Activated CD8-positive, alpha-beta T cell treated with anti-CD3 and anti-CD28 coated beads, Interleukin-2, amount 10 ng/mL, durations not matched to agents 7 days and 5 days (primary cell): ENCODE measurements at regions of chr22 and their contacts with region 1.

Region 1: GRCh38 chr22:40645579-40646197 is 9.2 kb upstream of the MRTFA start:
- DNase-seq: no peak
- ATAC-seq: no peak
- H3K4me3 Mint-ChIP-seq: no peak overlapping the region
- H3K27ac Mint-ChIP-seq: no peak overlapping the region
- H3K4me1 Mint-ChIP-seq: peaks cover 12% of the 10 kb centered on the region
- H3K27me3 Mint-ChIP-seq: peaks cover 2% of the 10 kb centered on the region

Region 2: DNA sequence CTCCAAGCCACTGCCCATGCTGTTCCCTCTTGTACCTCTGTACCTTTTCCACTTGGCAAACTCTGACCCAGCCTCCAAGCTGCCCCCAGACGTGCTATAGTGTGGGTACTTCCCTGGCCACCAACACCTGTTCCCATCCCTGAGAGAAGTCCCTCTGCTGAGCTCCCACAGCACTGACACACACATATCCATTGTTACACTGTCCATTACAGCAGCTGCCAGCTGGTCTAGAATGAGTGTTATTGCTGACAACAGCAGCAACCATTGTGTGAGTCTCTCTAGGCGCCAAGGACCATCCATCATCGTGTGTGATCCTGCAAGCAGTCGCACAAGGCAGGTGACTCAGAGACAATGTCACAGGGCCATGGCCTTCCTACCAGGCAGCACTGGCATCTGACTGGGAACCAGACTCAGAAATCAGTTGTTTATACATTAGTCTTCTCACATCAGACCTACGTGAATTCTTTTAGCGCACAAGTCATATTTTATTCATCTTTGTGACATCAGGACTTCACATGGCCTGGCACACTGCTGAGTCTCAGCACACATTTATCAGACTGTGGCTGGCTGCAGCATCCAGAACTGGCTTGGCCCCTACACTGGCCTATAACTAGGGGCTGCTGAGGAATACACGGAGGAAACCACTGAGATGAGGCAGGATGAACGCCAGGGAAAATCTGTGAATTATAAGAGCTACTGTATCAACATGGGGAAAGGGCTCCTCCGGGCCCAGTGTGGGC is 218.9 kb before region 1 on chr22:
- CTCF ChIA-PET with region 1: interaction called, 15 read pairs
- POLR2A ChIA-PET with region 1: no interaction called
- DNase-seq: no peak
- ATAC-seq: no peak
- H3K4me3 Mint-ChIP-seq: no peak overlapping the region
- H3K27ac Mint-ChIP-seq: peak overlapping the region; percentile 48
- H3K4me1 Mint-ChIP-seq: peaks cover 7% of the 10 kb centered on the region
- H3K27me3 Mint-ChIP-seq: no peaks in the 10 kb centered on the region

Region 3: DNA sequence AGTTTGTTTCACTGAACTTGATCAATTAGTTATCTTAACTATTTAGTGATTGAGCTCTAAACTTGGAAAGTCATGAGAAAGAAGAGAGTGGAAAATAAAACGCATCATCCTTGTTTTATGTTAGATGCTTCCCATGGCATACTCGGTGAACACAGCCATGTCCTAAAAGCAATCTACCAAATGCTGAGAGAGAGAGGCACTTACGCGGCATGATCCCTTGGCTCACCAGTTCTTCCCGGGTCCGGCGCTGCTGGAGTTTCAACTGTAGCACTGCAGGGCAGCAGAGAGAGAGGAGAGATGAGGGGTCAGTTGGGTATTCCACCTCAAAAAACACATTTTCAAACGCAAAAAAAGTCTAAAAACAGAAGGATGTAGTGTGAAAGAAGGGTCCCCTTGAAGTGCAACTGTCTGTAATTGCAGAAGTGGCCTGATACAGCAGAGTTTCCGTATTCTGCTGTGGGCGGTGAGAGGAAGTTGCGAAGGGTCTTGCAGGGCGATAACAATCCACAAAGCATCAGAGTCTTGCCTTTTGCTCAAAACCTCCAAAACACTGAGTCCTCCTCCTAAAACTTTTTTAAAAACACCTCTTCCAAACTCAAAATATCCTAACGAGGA is 182.6 kb before region 1 on chr22:
- CTCF ChIA-PET with region 1: interaction called, 12 read pairs
- POLR2A ChIA-PET with region 1: no interaction called
- DNase-seq: peak; percentile 72
- ATAC-seq: peak; percentile 83
- H3K4me3 Mint-ChIP-seq: peak overlapping the region; percentile 96
- H3K27ac Mint-ChIP-seq: peak overlapping the region; percentile 97
- H3K4me1 Mint-ChIP-seq: peaks cover 39% of the 10 kb centered on the region
- H3K27me3 Mint-ChIP-seq: no peaks in the 10 kb centered on the region

Region 4: GRCh38 chr22:40519284-40519947 is 126.3 kb before region 1 on chr22:
- CTCF ChIA-PET with region 1: interaction called, 229 read pairs
- POLR2A ChIA-PET with region 1: interaction called, 3 read pairs
- DNase-seq: no peak
- ATAC-seq: peak; percentile 94
- H3K4me3 Mint-ChIP-seq: peak overlapping the region; percentile 68
- H3K27ac Mint-ChIP-seq: peak overlapping the region; percentile 88
- H3K4me1 Mint-ChIP-seq: peaks cover 26% of the 10 kb centered on the region
- H3K27me3 Mint-ChIP-seq: no peaks in the 10 kb centered on the region

Region 5: GRCh38 chr22:40583053-40583741 is 62.5 kb before region 1 on chr22:
- CTCF ChIA-PET with region 1: interaction called, 21 read pairs
- POLR2A ChIA-PET with region 1: no interaction called
- DNase-seq: no peak
- ATAC-seq: no peak
- H3K4me3 Mint-ChIP-seq: no peak overlapping the region
- H3K27ac Mint-ChIP-seq: no peak overlapping the region
- H3K4me1 Mint-ChIP-seq: peaks cover 19% of the 10 kb centered on the region
- H3K27me3 Mint-ChIP-seq: no peaks in the 10 kb centered on the region